Heart right ventricle (tissue), 16 donors: ENCODE measurements at regions of chr4 and their contacts with region 1.

Region 1: GRCh38 chr4:113761620-113762185 is at the start of gene CAMK2D:
- DNase-seq: peak; percentile 88 to 91
- ATAC-seq: peak; percentile 74 to 90 (median 82)
- H3K4me3 ChIP-seq: peak within 1 kb of the TSS; percentile 70 to 89 (median 85)
- H3K27ac ChIP-seq: peak within 1 kb of the TSS; percentile 95 to 100 (median 98)
- H3K4me1 ChIP-seq: peaks cover 0 to 41% (median 32%) of the 10 kb centered on the region in 9 donors
- H3K27me3 ChIP-seq: no peaks in the 10 kb centered on the region
- CTCF ChIP-seq: peak; percentile 11 to 81 (median 63)
- total RNA-seq, gene CAMK2D: 173 to 286 (median 249) TPM

Region 2: GRCh38 chr4:113435893-113436292 is 325.8 kb before region 1 on chr4:
- intact Hi-C with region 1: loop called in 2 of 10 experiments (anchors 5 to 10 kb)
- DNase-seq: peak; percentile 16 to 75
- ATAC-seq: peak; percentile 44 to 89 (median 82)
- H3K4me3 ChIP-seq: peak overlapping the region in 1 of 10 donors; percentile 13
- H3K27ac ChIP-seq: peak overlapping the region in 9 of 10 donors; percentile 47 to 84 (median 73)
- H3K4me1 ChIP-seq: peaks cover 0 to 31% (median 24%) of the 10 kb centered on the region in 9 donors
- H3K27me3 ChIP-seq: no peaks in the 10 kb centered on the region
- CTCF ChIP-seq: no peak

Region 3: GRCh38 chr4:113468165-113469022 is 293.3 kb before region 1 on chr4:
- intact Hi-C with region 1: loop called in 1 of 10 experiments (anchors 2 kb)
- DNase-seq: peak; percentile 19 to 82
- ATAC-seq: peak; percentile 92 to 97 (median 94)
- H3K4me3 ChIP-seq: no peak overlapping the region
- H3K27ac ChIP-seq: peak overlapping the region; percentile 69 to 90 (median 86)
- H3K4me1 ChIP-seq: peaks cover 7 to 62% (median 38%) of the 10 kb centered on the region in 9 donors
- H3K27me3 ChIP-seq: no peaks in the 10 kb centered on the region
- CTCF ChIP-seq: no peak

Region 4: GRCh38 chr4:113547487-113548042 is 214.1 kb before region 1 on chr4:
- intact Hi-C with region 1: loop called in 7 of 10 experiments (anchors 2 to 10 kb)
- DNase-seq: peak; percentile 74 to 88
- ATAC-seq: peak; percentile 93 to 99 (median 98)
- H3K4me3 ChIP-seq: no peak overlapping the region
- H3K27ac ChIP-seq: peak overlapping the region in 9 of 10 donors; percentile 20 to 74 (median 47)
- H3K4me1 ChIP-seq: peaks cover 0 to 22% (median 13%) of the 10 kb centered on the region in 9 donors
- H3K27me3 ChIP-seq: no peaks in the 10 kb centered on the region
- CTCF ChIP-seq: peak; percentile 87 to 99 (median 98)

Region 5: GRCh38 chr4:113636438-113636818 is 125.3 kb before region 1 on chr4:
- intact Hi-C with region 1: loop called in 5 of 10 experiments (anchors 5 to 10 kb)
- DNase-seq: no peak
- ATAC-seq: peak in 7 of 8 donors; percentile 2 to 31 (median 11)
- H3K4me3 ChIP-seq: no peak overlapping the region
- H3K27ac ChIP-seq: peak overlapping the region; percentile 29 to 91 (median 80)
- H3K4me1 ChIP-seq: peaks cover 4 to 97% (median 75%) of the 10 kb centered on the region in 9 donors
- H3K27me3 ChIP-seq: no peaks in the 10 kb centered on the region
- CTCF ChIP-seq: peak in 4 of 9 donors; percentile 15 to 40 (median 36)